ENCODE measurements at regions of chr9 and their contacts with region 1.

Region 1: DNA sequence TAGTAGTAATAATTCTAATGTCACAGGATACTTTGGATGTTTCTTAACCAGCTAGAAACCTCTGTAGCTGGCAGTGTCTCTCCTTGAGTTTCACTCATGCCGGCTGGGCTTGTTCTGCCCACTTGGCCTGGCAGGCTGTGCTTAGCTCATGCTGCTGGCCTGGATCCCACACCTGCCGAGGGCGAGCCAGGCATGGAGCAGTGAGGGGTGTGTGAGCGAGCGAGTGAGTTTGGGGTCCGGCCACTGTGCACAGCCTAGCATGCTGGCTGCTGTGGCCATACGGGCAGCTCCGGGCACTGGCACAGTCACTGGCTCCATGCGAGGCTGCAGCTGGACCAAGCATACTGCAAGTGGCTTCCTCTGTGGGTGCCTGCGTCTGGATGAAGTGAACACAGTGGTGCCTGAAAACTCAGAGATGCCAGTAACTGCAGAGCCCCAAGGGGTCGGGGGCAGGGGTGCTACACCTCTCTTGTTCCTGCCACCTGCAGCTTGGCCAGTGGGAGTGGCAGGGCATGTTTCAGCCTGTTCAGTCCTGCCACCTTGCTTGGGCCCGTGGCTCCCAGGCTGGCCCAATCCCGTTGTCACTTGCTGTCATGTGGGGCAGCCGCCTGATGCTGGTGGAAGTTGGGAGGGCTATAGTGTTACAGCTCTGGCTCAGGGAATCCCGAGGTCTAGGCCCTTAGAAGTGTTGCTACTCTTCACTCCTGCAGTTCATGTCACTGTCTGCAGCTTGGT is 9.9 kb downstream of the FSD1L start:
- DNase-seq: no peak

Region 2: DNA sequence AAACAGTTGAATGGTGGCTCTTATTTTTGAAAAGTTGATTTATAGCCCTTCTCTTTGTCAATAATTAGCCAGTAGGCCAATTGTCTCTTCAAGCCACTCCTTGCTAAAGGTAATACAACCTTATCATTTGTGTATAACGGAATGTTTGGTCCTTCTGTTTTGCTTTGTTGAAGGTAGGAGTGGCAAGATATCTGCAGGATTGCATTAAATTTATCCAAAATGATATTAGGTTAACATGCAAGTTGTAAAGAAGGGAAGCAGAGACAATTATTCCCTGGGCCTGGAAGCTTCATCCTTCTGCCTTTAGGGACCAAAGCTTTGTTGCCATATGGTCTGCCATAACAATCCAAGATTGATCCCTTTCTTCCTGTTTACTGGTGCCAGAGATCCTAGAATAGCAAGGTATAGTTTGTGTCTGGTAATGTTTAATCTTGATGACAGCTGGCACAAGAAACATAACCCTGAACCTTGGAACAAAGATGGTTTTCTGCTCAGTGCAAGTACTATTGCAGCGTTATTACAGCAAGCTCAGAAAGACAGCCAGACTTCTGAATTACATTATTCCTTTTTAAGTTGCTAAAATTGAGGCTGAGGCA is 25.4 kb before region 1 on chr9:
- intact Hi-C with region 1: loop called in 1 of 2 experiments (anchors 1 kb)
- DNase-seq: no peak